AG04449 (cell line): ENCODE measurements at regions of chr5 and their contacts with region 1.

Region 1: DNA sequence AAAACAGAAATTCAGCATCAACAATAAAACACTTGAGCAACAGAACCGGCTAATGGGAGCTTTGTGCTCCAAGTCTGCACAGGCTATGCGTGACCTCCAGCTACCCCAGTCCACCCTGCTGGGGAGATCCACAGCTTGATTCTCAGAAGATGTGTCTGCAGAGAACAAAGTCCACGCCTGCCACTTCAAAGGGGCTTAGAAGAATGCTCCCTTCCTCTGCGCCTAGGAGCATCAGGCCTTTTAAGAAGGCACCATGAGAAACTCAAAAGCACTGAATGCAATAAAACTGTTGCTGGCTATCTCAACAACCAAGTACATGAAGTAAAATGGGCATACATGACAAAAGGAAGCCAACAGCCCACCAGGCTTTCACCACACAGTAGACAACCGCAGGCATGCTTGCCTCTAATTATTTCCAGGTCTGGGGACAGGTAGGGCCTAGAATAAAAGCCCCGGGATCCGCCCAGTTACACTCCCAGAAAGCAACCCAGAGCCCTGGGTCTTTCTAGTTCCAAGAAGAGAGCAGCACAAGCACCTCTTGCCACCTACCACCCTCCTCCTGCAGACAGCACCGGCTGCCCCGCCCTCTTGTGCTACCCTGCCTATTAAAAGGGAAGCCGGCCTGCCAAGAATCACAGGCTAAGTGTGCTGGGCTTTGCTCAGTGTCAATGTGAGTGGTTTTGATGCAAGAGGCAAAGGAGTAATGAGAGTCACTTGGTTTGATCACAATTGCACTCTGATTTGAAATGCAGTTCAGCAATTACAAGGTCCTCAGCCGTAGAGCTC is 123.2 kb downstream of the SPOCK1 start:
- DNase-seq: no peak
- H3K4me3 ChIP-seq: no peak overlapping the region
- CTCF ChIP-seq: no peak

Region 2: DNA sequence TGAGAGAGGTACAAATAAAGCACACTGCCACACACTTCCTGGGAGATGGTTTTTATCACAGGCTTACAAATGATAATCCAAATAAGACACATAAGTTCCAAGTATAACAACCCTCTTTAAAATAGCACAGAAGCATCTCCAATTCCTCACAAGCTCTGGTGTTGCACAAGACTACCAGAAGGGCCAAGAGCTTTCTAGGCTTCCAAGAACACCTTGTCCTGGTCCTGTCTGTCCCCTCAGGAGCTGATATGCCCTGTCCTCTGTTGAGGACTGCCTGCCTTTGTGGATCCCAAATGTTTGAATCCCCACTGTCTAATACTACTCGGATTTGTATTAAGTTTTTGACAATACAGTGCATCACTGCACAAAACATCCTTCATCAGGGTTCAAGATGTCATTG is 13.1 kb after region 1 on chr5:
- CTCF ChIA-PET with region 1: interaction called, 12 read pairs
- POLR2A ChIA-PET with region 1: no interaction called
- DNase-seq: no peak
- H3K4me3 ChIP-seq: no peak overlapping the region
- CTCF ChIP-seq: no peak